GM10248 (cell line): ENCODE measurements at regions of chr10 and their contacts with region 1.

Region 1: GRCh38 chr10:119370972-119371715 is 163.8 kb downstream of the GRK5 start:
- DNase-seq: no peak
- CTCF ChIP-seq: no peak

Region 2: DNA sequence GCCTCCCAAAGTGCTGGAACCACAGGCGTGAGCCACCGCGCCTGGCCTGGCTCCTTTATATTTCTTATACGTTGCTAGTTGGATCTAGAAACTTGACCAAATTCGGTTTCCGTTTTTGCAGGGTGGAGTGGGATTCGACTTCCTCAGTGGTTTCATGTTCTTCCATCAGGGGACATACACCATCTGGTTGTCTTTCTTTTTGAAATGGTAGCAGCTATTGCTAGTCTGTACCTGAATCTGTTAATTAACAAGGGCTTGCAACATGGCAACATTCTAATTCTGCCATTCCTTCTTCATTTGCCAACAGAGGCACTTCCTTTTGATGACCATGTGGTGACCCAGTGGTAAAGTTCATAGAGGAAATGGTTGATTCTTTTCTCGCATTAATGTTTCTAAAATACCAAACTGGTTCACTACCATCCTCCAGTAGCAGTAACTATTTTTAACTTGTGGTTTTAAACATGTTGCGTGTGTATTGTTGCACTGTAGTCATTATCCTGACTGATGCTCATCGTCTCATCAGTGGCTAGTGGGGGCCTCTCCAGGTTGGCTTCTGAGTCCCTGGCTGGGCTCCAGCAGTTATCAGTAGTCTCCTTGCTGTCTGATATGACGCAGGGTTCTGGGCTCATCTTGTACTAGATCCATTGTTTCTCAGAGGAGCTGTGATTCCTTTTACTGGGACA is 12.2 kb after region 1 on chr10:
- CTCF ChIA-PET with region 1: interaction called, 12 read pairs
- POLR2A ChIA-PET with region 1: no interaction called
- DNase-seq: no peak
- CTCF ChIP-seq: no peak